Dorsolateral prefrontal cortex (tissue), 120 donors: ENCODE measurements at regions of chr1 and their contacts with region 1.

Region 1: DNA sequence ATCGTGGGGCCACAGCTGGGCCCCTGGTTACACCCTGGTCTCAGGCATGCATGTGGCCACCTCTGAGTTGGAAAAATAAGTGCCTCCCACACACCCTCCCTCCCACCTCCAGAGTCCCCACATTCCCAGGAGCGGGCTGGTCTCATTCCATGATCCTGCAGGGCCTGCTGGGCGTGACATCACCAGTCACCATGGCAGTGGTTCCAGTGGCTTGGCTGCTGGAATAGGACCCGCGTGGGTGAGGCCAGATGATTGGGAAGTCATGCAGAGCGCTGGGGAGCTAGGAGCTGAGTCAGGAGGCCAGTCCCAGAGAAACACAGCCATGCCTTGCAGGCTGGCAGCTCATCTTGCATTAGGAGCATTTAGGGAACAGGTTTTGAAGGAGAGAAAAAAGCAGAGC is 125.4 kb upstream of the TMEM51 start:
- DNase-seq: peak in 9 of 10 donors; percentile 36 to 89 (median 69)
- H3K4me3 ChIP-seq: peak overlapping the region in 1 of 59 donors; percentile 8
- H3K27ac ChIP-seq: peak overlapping the region; percentile 0 to 89 (median 75)
- H3K27me3 ChIP-seq: no peaks in the 10 kb centered on the region
- CTCF ChIP-seq: no peak

Region 2: GRCh38 chr1:14616632-14617396 is 411.3 kb before region 1 on chr1:
- intact Hi-C with region 1: loop called in 1 of 2 experiments (anchors 5 kb)
- DNase-seq: no peak
- H3K4me3 ChIP-seq: no peak overlapping the region
- H3K27ac ChIP-seq: peak overlapping the region in 1 of 59 donors; percentile 62
- H3K27me3 ChIP-seq: no peaks in the 10 kb centered on the region
- CTCF ChIP-seq: no peak

Region 3: DNA sequence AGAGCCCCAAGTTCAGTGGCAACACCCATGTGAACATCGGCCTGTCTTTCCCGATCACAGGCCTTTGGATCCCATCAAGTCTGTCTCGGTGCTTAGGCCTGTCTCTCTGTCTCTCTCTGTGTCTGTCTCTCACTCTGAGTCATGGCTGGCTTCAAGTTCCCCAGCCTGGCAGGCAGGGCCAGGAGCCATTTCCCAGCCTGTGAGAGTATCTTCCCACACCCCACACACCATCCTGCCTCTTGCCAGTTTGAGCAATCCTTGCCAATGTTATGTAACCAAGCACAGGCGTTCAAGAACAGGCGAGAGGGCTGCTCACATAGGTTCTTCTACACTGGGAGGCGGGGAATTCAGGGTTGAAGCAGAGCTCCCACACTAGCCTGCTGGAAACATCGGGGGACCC is 55.5 kb after region 1 on chr1:
- intact Hi-C with region 1: no loop called
- DNase-seq: no peak
- H3K4me3 ChIP-seq: no peak overlapping the region
- H3K27ac ChIP-seq: no peak overlapping the region
- H3K27me3 ChIP-seq: no peaks in the 10 kb centered on the region
- CTCF ChIP-seq: no peak

Region 4: DNA sequence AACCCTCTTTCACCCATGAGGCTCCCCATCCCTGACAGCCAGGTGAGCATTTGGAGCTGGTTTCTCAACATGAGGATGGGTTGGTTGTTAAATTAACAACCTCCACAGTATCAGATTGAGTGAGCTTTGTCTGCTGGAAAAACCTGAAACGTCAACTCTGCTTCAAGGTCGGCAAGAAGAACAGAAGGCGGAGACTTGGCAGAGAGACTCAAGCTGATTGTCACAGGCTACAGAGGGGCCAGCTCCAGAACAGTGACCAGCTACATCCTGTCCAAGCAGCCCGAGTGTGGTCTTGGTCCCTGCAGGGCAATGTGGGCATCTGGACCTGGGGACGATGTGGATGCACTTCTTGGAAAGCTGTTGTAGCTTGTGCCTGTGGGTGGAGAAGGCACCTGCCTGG is 88.9 kb after region 1 on chr1:
- intact Hi-C with region 1: no loop called
- DNase-seq: peak in 1 of 10 donors; percentile 25
- H3K4me3 ChIP-seq: no peak overlapping the region
- H3K27ac ChIP-seq: peak overlapping the region in 1 of 59 donors; percentile 29
- H3K27me3 ChIP-seq: no peaks in the 10 kb centered on the region
- CTCF ChIP-seq: no peak

Region 5: DNA sequence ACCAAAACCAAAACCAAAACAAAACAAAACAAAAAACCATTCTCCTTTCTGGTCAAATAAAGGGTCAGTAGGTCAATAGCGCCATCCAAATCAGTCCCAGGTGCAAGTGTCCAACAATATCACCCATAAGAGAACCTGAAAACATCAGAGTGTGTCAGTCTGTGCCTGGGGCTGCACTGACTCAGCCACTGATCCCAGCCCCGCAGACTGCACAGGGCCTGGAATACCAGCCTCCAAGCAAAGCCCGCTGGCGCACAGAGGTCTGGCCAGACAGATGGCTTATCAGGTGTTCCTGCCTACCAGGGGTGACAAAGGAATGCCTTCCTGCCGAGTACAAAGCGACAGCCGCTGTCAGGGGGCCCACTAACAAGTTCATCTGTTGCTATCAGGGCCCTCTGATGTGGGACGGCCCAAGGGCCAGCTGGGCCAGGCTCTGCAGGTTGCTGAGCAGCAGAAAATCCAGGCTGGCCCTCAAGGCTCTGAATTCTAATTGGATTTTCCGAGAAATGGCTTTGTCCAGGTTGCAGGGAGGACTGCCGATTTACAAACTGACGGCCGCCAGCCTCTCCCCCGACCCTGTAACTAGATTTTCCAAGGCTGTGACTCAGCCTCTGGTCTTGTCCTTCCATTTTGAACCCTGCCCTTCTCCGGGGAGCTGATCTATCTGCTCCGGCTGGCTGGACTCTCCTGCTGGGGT is 111.7 kb after region 1 on chr1:
- intact Hi-C with region 1: no loop called
- DNase-seq: peak in 1 of 10 donors; percentile 95
- H3K4me3 ChIP-seq: no peak overlapping the region
- H3K27ac ChIP-seq: peak overlapping the region in 1 of 59 donors; percentile 81
- H3K27me3 ChIP-seq: no peaks in the 10 kb centered on the region
- CTCF ChIP-seq: no peak